Activated CD4-positive, alpha-beta memory T cell treated with anti-CD3 and anti-CD28 coated beads for 36 hours (primary cell): ENCODE measurements at regions of chr14 and their contacts with region 1.

Region 1: DNA sequence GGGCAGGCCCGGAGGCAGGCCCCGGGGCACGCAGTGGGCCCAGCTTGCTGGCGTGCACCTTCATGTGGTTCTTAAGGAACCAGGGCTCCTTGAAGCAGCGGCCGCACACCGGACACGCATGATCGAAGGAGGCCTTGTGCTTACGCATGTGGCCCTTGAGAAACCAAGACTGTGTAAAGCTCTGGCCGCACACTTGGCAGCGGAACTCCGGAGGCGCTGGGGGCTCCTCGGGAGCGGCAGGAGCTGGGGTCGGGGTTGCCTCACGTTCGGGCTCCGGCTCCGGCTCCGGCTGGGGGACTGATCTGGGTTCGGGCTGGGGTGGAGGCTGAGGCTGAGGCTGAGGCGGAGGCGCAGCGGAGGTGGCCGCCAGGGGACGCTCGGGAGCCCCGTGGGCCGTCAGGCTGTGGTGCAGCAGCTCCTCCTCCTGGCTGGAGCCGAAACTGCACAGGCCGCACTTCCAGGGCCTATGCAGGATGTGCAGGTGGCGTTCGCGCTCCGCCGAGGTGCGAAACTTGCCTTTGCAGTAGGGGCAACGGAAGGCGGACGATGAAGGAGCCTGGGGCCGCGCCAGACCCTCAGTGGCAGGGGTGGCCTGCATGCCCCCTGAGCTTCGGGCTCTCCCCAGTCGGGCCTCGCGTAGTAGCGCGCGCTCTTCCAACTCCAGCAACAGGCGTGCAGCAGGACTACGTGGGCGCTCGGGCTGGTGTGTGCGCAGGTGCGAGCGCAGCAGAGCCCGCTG is 6.0 kb downstream of the ZNF219 start:
- DNase-seq: peak; percentile 92
- H3K4me3 Mint-ChIP-seq: no peak overlapping the region
- H3K27ac Mint-ChIP-seq: no peak overlapping the region
- H3K4me1 Mint-ChIP-seq: peaks cover 21% of the 10 kb centered on the region
- H3K27me3 Mint-ChIP-seq: no peaks in the 10 kb centered on the region

Region 2: DNA sequence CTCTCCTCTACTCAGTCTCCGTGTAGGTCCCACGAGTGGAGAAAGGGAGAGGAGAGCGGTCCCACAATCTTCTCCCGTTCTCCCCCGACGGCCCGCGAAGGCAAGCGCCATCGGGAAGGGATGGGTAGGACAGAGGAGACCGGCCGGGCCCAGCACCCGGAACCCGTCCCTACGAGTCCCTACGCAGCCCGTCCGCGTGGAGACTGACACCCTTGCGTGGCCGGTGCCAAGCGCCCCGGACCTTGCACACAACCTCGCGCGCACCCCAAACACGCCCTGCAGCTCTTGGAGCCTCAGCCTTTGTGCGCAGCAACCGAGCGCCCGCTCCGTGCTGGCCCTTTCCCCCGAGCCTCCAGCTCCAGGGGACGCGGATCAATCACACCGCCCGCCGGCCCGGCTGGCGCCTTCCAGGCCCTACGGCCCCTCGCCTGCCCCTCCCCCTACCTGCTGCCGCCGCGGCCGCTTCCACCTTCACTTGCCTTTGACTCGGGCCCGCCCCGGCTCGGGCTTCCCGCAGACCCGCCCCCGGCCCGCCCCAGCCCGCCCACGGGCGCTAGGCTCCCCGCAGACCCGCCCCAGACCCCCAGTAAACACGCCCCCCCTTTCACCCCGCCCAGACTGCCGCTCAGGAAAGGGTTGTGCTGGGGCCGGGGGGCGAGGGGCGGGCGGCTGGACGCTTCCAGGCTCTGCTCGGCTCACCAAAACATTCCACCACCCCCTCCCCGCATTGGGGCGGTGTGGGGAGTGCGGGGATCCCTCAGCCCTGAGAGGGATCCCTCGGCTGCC is 67.7 kb before region 1 on chr14 and contains the start of gene NDRG2:
- CTCF ChIA-PET with region 1: interaction called, 278 read pairs
- POLR2A ChIA-PET with region 1: no interaction called
- intact Hi-C with region 1: no loop called
- DNase-seq: peak; percentile 76
- H3K4me3 Mint-ChIP-seq: peak within 1 kb of the TSS; percentile 73
- H3K27ac Mint-ChIP-seq: no peak within 1 kb of the TSS
- H3K4me1 Mint-ChIP-seq: peaks cover 9% of the 10 kb centered on the region
- H3K27me3 Mint-ChIP-seq: no peaks in the 10 kb centered on the region
- total RNA-seq, gene NDRG2: 7.7 to 9.6 TPM

Region 3: DNA sequence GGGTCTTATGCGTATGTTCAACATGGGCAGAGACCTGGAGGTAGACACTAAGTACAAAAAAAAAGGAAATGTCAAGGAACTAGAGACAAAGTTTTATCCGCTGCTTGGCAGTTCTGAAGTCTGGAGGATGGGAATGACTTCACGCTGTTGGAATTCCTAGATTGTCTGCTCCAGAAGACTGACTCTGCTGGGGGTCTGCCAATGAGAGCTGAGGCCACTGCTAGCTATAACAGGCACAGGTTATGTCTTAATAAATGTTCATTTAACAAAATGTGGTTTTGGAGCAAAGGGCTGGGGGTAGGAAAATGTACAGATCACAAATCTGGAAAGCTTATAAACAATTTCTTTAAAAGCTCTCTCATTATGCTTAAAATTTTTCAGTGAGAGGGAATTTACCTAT is 29.0 kb before region 1 on chr14:
- CTCF ChIA-PET with region 1: interaction called, 78 read pairs
- POLR2A ChIA-PET with region 1: no interaction called
- intact Hi-C with region 1: no loop called
- DNase-seq: no peak
- H3K4me3 Mint-ChIP-seq: no peak overlapping the region
- H3K27ac Mint-ChIP-seq: no peak overlapping the region
- H3K4me1 Mint-ChIP-seq: peaks cover under 1% of the 10 kb centered on the region
- H3K27me3 Mint-ChIP-seq: peaks cover 33% of the 10 kb centered on the region

Region 4: GRCh38 chr14:21071225-21072030 is 21.0 kb before region 1 on chr14:
- CTCF ChIA-PET with region 1: interaction called, 78 read pairs
- POLR2A ChIA-PET with region 1: interaction called, 4 read pairs
- intact Hi-C with region 1: loop called (anchors 1 kb)
- DNase-seq: peak; percentile 83
- H3K4me3 Mint-ChIP-seq: peak overlapping the region; percentile 60
- H3K27ac Mint-ChIP-seq: no peak overlapping the region
- H3K4me1 Mint-ChIP-seq: peaks cover 33% of the 10 kb centered on the region
- H3K27me3 Mint-ChIP-seq: peaks cover 49% of the 10 kb centered on the region